Right ventricle myocardium inferior (tissue), 1 donor: ENCODE measurements at regions of chr1 and their contacts with region 1.

Region 1: DNA sequence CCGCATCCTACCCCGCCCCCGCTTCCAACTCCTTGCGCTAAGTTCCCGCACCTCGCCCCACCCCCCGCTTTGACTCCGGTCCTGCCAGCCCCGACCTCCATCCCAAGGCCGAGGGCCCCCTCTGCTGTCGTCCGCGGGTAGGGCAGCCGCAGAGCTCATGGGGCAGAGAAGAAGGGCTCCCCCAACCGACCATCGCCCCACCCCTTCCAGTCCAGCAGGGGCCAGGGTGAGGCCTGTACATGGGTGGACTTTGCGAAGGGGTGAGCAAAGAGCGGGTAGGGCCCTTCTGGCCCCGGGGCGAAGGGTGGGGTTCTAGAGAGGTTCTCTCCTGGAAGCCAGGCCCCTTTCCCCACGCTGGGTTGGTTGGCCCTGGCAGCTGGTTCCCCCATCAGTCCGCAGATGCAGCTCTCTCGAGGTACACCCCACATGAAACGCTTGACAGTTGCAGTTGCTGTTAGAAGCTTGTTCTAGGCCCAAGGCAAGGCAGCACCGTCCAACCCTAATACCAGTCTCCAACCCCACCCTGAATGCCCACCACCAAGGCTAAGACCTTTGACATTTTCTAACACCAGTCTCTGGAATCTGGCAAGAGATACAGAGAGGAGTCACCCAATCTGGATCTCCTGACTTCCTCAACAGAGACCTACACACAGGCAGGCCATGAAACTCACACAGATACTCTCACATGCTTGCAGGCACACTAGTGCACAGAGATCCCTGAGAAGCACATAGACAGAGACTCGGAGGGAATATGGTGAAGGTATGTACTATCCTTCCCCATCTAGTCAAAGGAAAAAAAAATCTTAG is 25.3 kb upstream of the ADGRB2 start:
- DNase-seq: peak; percentile 96
- ATAC-seq: peak; percentile 92

Region 2: DNA sequence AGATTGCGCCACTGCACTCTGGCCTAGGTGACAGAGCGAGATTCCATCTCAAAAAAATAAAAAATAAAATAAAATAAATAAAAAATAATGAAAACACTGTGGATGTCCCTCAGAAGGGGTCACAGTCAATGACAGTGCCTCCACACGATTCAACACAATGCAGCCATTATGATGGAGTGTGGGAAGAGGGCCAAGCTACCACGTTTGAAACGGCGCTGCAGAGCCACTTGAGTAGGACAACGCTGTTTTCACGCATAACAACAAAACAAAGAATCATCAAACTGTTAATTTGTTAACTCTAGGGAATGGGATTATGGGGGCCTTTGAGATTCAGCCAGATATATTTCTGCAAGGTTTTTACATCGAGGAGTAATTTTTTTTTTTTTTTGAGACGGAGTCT is 586.2 kb before region 1 on chr1:
- intact Hi-C with region 1: no loop called
- DNase-seq: no peak
- ATAC-seq: no peak

Region 3: DNA sequence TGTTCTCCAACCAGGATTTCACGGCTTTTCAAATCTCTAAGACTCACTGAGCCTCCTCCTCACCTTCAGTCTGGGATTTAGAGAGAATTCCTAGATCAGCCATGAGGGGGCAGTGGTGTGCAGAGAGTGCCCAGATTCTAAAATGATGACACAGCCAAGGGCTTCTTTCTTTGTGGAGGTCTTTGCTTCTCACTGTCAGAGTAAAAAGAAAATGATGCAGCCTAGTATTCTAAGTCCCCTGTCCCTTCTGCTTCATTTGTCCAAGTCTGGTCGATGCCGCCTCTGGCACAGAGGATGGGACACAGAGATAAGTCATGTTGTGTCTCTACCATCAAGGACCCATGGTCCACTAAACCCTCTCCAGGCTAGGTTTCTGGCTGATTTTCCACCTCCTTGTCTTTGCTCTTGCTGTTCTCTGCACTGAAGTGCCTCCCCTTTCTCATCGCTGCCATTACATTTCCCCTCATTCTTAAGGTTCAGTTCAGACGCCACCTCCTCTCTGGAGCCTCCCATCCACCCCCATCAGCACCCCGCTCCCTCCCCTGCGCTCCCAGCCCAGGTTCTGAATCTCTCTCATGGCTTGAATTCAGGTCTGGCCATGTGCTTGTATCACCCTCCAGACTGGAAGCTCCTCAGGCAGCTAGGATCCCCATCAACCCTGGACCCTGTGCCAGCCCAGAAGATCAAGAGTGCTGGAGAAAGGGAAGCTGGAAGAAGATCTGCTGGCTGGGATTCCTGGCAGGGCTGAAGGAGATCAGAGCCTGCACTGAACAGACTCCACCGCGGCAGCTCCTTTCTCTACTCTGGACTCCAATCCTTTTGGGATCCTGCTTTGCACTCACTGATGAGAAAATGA is 225.1 kb before region 1 on chr1:
- intact Hi-C with region 1: loop called (anchors 10 kb)
- DNase-seq: no peak
- ATAC-seq: peak; percentile 36

Region 4: GRCh38 chr1:31663622-31664452 is 125.6 kb before region 1 on chr1:
- intact Hi-C with region 1: loop called (anchors 1 kb)
- DNase-seq: no peak
- ATAC-seq: peak; percentile 48

Region 5: GRCh38 chr1:31715087-31715872 is 74.2 kb before region 1 on chr1:
- intact Hi-C with region 1: loop called (anchors 2 kb)
- DNase-seq: peak; percentile 95
- ATAC-seq: peak; percentile 97

Region 6: DNA sequence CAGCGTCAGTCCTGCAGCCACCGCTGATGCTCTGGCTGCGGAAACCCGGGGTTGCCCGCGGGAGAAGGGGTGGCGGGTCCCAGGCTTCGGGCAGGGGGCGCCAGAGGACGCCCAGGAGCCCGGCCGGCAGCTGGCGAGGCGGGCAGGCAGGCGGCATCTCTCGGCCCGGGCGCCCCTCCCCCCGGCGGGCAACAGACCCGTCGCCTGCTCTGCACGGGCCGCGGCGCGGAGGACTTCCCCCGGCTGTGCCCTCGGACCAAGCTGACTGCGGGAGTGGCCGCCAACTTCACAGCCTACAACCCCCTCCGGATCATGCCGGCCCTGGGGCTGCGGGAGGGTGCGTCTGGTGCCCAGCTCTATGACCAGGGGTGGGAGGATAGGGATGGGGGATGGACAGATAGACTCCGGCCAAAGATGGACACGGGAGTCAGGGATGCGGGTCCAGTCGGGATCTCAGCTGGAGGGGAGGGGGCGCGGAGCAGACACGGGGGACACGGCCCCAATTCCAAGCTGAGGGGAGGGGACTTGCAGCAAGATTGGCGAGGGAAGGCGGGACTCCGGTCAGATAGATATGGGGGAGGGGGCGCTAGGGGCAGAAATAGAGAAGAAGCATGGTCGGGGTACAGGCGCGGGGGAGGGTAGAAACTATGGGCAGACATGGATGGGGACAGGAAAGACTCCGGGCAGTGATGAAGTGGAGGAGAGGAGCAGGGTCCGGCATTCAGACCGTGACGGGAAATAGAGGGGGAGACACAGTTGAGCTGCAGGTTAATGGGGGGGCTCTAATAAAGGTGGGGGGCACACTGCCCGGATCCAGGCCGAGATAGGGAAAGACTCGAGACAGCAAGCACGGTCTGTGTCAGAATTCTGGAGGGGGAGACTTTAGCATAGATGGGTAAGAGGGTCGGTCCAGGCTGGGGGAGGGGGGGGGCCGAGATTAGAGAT is 26.5 kb before region 1 on chr1:
- intact Hi-C with region 1: loop called (anchors 2 kb)
- DNase-seq: peak; percentile 84
- ATAC-seq: peak; percentile 47